ENCODE measurements at regions of chr2 and their contacts with region 1.

Region 1: GRCh38 chr2:152657043-152657442 is 60.2 kb downstream of the PRPF40A start:
- DNase-seq: no peak
- ATAC-seq: peak; percentile 28
- H3K4me3 Mint-ChIP-seq: no peak overlapping the region
- H3K27ac Mint-ChIP-seq: peak overlapping the region; percentile 50
- H3K4me1 Mint-ChIP-seq: peaks cover 4% of the 10 kb centered on the region
- H3K27me3 Mint-ChIP-seq: no peaks in the 10 kb centered on the region
- CTCF ChIP-seq: no peak

Region 2: GRCh38 chr2:151465771-151466170 is 1191.3 kb before region 1 on chr2:
- CTCF ChIA-PET with region 1: no interaction called
- POLR2A ChIA-PET with region 1: no interaction called
- intact Hi-C with region 1: loop called (anchors 10 kb)
- DNase-seq: no peak
- ATAC-seq: no peak
- H3K4me3 Mint-ChIP-seq: no peak overlapping the region
- H3K27ac Mint-ChIP-seq: no peak overlapping the region
- H3K4me1 Mint-ChIP-seq: no peaks in the 10 kb centered on the region
- H3K27me3 Mint-ChIP-seq: no peaks in the 10 kb centered on the region
- CTCF ChIP-seq: no peak

Region 3: GRCh38 chr2:152676461-152676860 is 19.4 kb after region 1 on chr2:
- CTCF ChIA-PET with region 1: no interaction called
- POLR2A ChIA-PET with region 1: no interaction called
- intact Hi-C with region 1: loop called (anchors 2 kb)
- DNase-seq: no peak
- ATAC-seq: no peak
- H3K4me3 Mint-ChIP-seq: no peak overlapping the region
- H3K27ac Mint-ChIP-seq: no peak overlapping the region
- H3K4me1 Mint-ChIP-seq: no peaks in the 10 kb centered on the region
- H3K27me3 Mint-ChIP-seq: no peaks in the 10 kb centered on the region
- CTCF ChIP-seq: no peak

Measured in activated B cell treated with CpG ODN at 0.5 μM for 24 hours (primary cell).